HCT116 (cell line): ENCODE measurements at regions of chr16 and their contacts with region 1.

Region 1: GRCh38 chr16:82263521-82264143 is 93.6 kb upstream of the MPHOSPH6 start:
- DNase-seq: peak; percentile 53
- ATAC-seq: peak; percentile 98
- H3K4me3 ChIP-seq: no peak overlapping the region
- H3K27ac ChIP-seq: no peak overlapping the region
- H3K4me1 ChIP-seq: no peaks in the 10 kb centered on the region
- H3K27me3 ChIP-seq: peaks cover 64% of the 10 kb centered on the region
- CTCF ChIP-seq: peak; percentile 66 to 100 (median 98); a peak in 5 of 6 replicates
- POLR2A ChIP-seq: no peak
- RAD21 ChIP-seq: peak; percentile 91

Region 2: DNA sequence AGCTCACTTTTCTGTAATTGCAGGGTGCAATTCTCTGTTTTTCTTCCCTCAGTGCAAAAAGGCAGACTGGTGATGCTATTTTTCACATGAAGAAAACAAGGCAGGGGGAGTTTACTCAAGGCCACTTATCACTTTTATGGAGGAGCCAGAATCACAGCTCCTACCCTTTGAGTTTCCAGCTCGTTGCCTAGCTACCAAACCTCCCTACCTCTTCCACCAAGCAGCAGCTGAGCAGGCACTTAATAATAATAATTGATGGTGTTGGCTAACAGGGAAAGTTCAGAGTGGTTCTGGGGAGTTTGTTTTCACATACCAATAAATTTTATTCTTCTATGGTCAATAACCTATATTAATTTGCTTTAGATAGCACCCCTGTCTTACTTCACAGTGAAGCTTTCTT is 61.7 kb before region 1 on chr16:
- CTCF ChIA-PET with region 1: no interaction called
- POLR2A ChIA-PET with region 1: no interaction called
- RAD21 ChIA-PET with region 1: no interaction called
- intact Hi-C with region 1: no loop called
- DNase-seq: no peak
- ATAC-seq: no peak
- H3K4me3 ChIP-seq: no peak overlapping the region
- H3K27ac ChIP-seq: no peak overlapping the region
- H3K4me1 ChIP-seq: no peaks in the 10 kb centered on the region
- H3K27me3 ChIP-seq: peaks cover 16% of the 10 kb centered on the region
- CTCF ChIP-seq: no peak
- POLR2A ChIP-seq: no peak
- RAD21 ChIP-seq: no peak

Region 3: DNA sequence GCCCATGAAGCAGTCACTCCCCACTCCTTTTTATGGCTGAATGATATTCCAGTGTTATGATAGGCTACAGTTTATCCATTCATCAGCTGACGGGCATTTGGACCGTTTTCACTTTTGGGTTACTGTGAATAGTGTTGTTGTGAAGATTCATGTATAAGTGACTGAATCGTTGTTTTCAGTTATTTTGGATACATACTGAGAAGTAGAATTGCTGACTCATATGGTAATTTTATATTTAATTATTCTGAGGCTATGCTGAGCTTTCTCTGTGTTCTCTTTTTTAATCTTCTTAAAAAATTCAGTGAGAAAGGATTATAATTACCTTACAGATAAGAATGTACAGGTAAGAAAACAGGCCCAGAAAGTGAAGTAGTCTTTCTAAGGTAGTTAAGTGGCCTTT is 24.3 kb after region 1 on chr16:
- CTCF ChIA-PET with region 1: no interaction called
- POLR2A ChIA-PET with region 1: no interaction called
- RAD21 ChIA-PET with region 1: no interaction called
- intact Hi-C with region 1: no loop called
- DNase-seq: no peak
- ATAC-seq: no peak
- H3K4me3 ChIP-seq: no peak overlapping the region
- H3K27ac ChIP-seq: no peak overlapping the region
- H3K4me1 ChIP-seq: no peaks in the 10 kb centered on the region
- H3K27me3 ChIP-seq: peaks cover 54% of the 10 kb centered on the region
- CTCF ChIP-seq: no peak
- POLR2A ChIP-seq: no peak
- RAD21 ChIP-seq: no peak

Region 4: GRCh38 chr16:82344157-82344556 is 80.5 kb after region 1 on chr16:
- CTCF ChIA-PET with region 1: interaction called, 48 read pairs
- POLR2A ChIA-PET with region 1: no interaction called
- RAD21 ChIA-PET with region 1: interaction called, 3 to 4 read pairs
- intact Hi-C with region 1: loop called (anchors 1 kb)
- DNase-seq: no peak
- ATAC-seq: peak; percentile 88
- H3K4me3 ChIP-seq: no peak overlapping the region
- H3K27ac ChIP-seq: no peak overlapping the region
- H3K4me1 ChIP-seq: no peaks in the 10 kb centered on the region
- H3K27me3 ChIP-seq: no peaks in the 10 kb centered on the region
- CTCF ChIP-seq: peak; percentile 36 to 57 (median 55); a peak in 5 of 6 replicates
- POLR2A ChIP-seq: no peak
- RAD21 ChIP-seq: peak; percentile 41

Region 5: DNA sequence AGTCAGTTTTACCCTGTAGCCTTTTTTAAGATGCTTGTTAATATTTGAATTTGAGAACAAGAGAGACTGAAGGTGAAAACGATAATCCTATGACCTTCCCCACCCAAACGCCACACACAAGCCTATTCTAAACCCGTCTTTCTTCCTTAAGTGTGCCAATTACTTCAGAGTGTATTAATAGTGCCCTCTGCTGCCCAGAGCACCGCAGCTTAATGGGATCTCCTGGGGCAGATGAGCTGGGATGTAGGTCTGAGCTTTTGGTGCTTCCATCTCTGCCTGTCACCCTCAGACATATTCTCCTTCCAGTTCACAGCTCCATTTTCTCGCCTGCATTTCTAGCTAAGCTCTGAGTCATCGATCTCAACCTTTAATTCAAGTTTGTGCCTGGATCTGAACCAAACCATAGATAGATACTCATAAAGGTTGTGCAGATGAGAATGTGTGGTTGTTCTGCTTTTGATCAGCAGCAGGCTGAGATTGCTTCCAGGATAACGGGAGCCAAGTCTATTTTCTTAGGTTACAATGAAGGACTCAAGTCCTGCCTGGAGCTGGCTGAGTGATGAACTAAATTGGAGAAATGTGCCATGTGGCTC is 316.8 kb after region 1 on chr16:
- CTCF ChIA-PET with region 1: interaction called, 9 read pairs
- POLR2A ChIA-PET with region 1: no interaction called
- RAD21 ChIA-PET with region 1: no interaction called
- intact Hi-C with region 1: loop called (anchors 1 kb)
- DNase-seq: peak; percentile 4
- ATAC-seq: peak; percentile 81
- H3K4me3 ChIP-seq: no peak overlapping the region
- H3K27ac ChIP-seq: no peak overlapping the region
- H3K4me1 ChIP-seq: no peaks in the 10 kb centered on the region
- H3K27me3 ChIP-seq: peaks cover 22% of the 10 kb centered on the region; the same call in 1 of the 2 replicates
- CTCF ChIP-seq: peak; percentile 33 to 47 (median 42); a peak in 4 of 6 replicates
- POLR2A ChIP-seq: no peak
- RAD21 ChIP-seq: peak; percentile 61

Region 6: DNA sequence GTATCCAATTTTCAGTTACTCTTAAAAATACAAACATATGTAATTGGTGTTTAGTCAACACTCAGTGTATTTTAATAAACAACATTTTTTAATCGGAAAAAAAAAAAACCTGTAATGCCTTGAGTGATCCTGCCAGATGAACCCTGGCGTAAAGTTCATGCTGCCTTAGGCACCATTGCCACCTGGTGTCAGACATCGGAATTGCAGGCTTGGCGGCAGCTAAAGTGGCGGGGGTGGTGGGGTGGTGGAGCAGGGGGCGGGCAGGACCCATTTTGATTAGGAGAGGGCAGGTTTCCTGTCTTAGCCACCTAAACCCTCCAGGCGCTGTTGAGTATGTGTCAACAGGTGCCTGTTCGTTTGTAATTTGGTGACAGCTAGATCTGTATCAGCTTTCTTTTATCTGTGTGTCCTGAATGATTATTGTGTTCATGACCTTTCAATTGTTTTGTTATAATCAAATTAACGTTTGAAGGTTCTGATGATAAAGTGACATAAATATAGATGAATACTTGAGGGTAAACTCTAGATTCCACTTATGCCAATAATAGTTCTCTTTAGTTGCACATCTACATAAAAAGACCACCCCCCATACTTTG is 951.9 kb after region 1 on chr16:
- CTCF ChIA-PET with region 1: interaction called, 3 read pairs
- POLR2A ChIA-PET with region 1: no interaction called
- RAD21 ChIA-PET with region 1: no interaction called
- intact Hi-C with region 1: loop called (anchors 1 kb)
- DNase-seq: peak; percentile 21
- ATAC-seq: peak; percentile 77
- H3K4me3 ChIP-seq: no peak overlapping the region
- H3K27ac ChIP-seq: no peak overlapping the region
- H3K4me1 ChIP-seq: no peaks in the 10 kb centered on the region
- H3K27me3 ChIP-seq: no peaks in the 10 kb centered on the region
- CTCF ChIP-seq: peak; percentile 28 to 92 (median 84); a peak in 5 of 6 replicates
- POLR2A ChIP-seq: no peak
- RAD21 ChIP-seq: peak; percentile 65

Region 7: GRCh38 chr16:83878838-83879237 is 1615.2 kb after region 1 on chr16:
- CTCF ChIA-PET with region 1: no interaction called
- POLR2A ChIA-PET with region 1: no interaction called
- RAD21 ChIA-PET with region 1: no interaction called
- intact Hi-C with region 1: loop called (anchors 2 kb)
- DNase-seq: peak; percentile 52
- ATAC-seq: peak; percentile 72
- H3K4me3 ChIP-seq: no peak overlapping the region
- H3K27ac ChIP-seq: no peak overlapping the region
- H3K4me1 ChIP-seq: no peaks in the 10 kb centered on the region; a peak in 1 of 4 replicates
- H3K27me3 ChIP-seq: peaks cover 17% of the 10 kb centered on the region
- CTCF ChIP-seq: peak; percentile 63 to 93 (median 79)
- POLR2A ChIP-seq: no peak
- RAD21 ChIP-seq: peak; percentile 93